Tibial artery (tissue), 4 donors: ENCODE measurements at regions of chr16 and their contacts with region 1.

Region 1: GRCh38 chr16:46883690-46884512 is at the start of gene GPT2:
- DNase-seq: peak; percentile 98
- H3K4me3 ChIP-seq: peak within 1 kb of the TSS; percentile 75 to 77
- H3K27ac ChIP-seq: peak within 1 kb of the TSS; percentile 41 to 45
- H3K4me1 ChIP-seq: peaks cover 0 to 10% (median 3%) of the 10 kb centered on the region in 4 donors
- H3K27me3 ChIP-seq: peaks cover 0 to 2% of the 10 kb centered on the region in 2 donors
- CTCF ChIP-seq: peak; percentile 11 to 32

Region 2: GRCh38 chr16:46973207-46973995 is 89.5 kb after region 1 on chr16 and contains the start of gene DNAJA2:
- intact Hi-C with region 1: loop called (anchors 5 kb)
- DNase-seq: peak; percentile 89 to 95
- H3K4me3 ChIP-seq: peak within 1 kb of the TSS; percentile 81 to 89
- H3K27ac ChIP-seq: peak within 1 kb of the TSS; percentile 93 to 95
- H3K4me1 ChIP-seq: peaks cover 0 to 37% (median 22%) of the 10 kb centered on the region in 4 donors
- H3K27me3 ChIP-seq: no peaks in the 10 kb centered on the region
- CTCF ChIP-seq: no peak